ENCODE measurements at regions of chr5 and their contacts with region 1.

Region 1: DNA sequence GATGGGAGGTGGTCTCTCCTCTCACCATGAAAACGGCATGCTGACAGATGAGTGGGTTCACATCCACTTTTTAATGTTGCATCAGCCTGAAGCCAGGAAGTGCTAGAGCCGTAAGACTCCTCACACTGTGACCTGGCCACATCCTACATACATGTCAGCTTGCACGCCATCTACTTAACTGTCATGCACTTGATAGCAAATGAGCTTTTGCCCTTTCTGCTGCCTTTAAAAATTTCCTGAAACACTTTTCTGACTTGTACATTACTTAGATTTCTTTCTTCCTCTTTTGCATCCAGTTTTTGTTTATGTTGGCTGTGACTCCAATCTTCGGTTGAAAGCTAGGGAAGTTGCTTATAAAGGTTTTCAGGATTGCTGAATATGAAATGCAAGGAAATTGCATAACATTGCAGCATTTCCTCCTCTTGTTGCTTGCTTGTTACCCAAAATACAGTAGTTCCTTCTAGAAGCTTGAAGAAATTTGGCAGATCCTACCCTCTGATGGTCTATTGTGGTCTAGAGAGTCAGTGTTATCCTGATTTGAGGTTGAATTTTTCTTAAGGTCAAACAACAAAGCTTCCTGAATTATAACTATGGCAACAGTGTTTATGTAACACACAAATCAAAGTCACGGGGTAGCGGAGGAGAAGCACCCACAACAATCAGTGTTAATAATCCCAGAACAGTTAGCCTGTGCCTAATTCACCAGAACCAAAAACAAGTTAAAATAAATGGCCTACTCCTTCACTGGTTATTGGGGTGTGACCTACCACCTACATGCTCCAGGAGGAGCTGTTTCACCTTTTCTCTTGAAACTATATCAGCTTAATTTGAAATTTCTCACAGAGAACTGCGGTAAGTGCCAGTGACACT is 232.5 kb downstream of the ARHGAP26 start:
- DNase-seq: peak; percentile 89
- ATAC-seq: peak; percentile 88
- H3K4me3 Mint-ChIP-seq: peak overlapping the region; percentile 63
- H3K27ac Mint-ChIP-seq: peak overlapping the region; percentile 100
- H3K4me1 Mint-ChIP-seq: peaks cover 86% of the 10 kb centered on the region
- H3K27me3 Mint-ChIP-seq: no peaks in the 10 kb centered on the region
- CTCF ChIP-seq: peak; percentile 79

Region 2: DNA sequence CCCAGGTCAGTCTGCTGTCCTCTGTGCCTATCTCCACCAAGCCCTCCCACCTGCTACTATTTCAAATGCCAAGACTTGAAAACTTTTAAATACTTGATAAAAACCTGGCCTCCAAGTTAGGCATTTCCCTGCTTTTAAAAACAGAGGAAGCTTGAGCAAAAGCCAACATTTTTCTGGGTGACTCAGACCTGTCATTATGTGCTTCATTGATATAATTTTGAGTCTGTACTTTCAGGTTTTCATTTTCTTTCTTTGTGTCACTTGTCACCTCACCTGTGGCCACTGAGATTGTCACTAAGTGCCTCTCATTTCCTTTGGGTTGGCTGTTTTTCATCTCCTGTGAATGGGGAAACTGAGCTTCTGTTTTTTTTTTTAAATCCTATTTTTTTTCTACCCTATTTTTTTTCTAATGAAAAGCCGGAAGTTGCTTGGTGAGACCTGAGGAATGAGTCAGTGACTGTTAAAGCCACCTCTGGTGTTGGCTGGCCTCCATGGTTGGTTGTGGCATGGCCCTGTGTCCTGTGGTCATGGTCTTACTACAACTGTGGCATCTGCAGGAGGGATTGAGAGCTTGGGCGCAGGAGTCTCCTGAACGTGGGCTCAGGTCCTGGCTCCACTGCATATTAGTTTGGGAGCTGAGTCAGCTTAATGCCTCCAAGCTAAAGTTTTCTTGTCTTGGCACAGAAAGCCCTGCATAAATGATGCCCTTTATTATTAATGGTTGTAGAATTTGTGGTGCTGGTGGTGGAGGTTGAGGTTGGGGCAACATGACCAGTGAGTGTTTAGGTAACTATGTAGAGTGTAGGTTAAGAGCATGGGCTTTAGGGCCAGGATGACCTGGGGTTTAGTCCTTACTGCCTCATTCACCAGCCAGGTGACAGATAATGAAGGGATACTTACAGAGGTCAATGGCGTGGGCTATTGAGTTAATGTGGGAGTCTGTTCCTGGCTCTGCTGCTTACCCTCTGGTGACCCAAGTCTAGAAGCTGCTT is 175.7 kb before region 1 on chr5:
- CTCF ChIA-PET with region 1: no interaction called
- POLR2A ChIA-PET with region 1: no interaction called
- intact Hi-C with region 1: no loop called
- DNase-seq: peak; percentile 68
- ATAC-seq: peak; percentile 66
- H3K4me3 Mint-ChIP-seq: no peak overlapping the region
- H3K27ac Mint-ChIP-seq: peak overlapping the region; percentile 69
- H3K4me1 Mint-ChIP-seq: peaks cover 86% of the 10 kb centered on the region
- H3K27me3 Mint-ChIP-seq: no peaks in the 10 kb centered on the region
- CTCF ChIP-seq: no peak

Region 3: DNA sequence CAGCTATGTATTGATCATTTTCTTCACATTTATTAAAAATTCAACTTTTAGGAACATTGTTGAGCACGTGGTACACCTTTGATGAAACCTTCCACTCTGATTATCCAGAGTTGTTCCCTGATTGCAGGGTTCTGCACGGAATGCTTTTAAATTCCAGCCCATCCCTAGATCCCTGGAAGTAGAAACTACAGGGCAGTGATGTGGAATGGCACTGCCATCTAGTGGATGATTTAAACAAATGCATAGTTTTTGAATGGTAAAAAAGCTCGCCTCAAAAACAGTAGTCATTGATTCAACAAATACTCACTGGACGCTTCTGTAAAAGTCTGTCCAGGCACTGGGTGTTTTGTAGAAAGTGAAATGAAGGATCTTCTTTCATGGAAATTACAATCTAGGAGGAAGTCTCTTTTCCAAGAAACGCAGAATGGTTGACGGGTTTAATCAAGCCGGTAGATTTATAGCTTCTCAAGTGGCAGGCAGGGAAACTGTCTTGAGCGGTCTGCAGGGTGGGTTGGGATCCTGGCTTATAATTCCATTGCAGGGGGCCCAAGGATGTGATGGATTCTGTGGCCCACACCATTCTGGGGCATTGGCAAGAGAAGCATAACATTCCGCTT is 114.1 kb before region 1 on chr5:
- CTCF ChIA-PET with region 1: interaction called, 11 read pairs
- POLR2A ChIA-PET with region 1: no interaction called
- intact Hi-C with region 1: no loop called
- DNase-seq: no peak
- ATAC-seq: no peak
- H3K4me3 Mint-ChIP-seq: no peak overlapping the region
- H3K27ac Mint-ChIP-seq: no peak overlapping the region
- H3K4me1 Mint-ChIP-seq: peaks cover 8% of the 10 kb centered on the region
- H3K27me3 Mint-ChIP-seq: no peaks in the 10 kb centered on the region
- CTCF ChIP-seq: peak; percentile 93

Region 4: DNA sequence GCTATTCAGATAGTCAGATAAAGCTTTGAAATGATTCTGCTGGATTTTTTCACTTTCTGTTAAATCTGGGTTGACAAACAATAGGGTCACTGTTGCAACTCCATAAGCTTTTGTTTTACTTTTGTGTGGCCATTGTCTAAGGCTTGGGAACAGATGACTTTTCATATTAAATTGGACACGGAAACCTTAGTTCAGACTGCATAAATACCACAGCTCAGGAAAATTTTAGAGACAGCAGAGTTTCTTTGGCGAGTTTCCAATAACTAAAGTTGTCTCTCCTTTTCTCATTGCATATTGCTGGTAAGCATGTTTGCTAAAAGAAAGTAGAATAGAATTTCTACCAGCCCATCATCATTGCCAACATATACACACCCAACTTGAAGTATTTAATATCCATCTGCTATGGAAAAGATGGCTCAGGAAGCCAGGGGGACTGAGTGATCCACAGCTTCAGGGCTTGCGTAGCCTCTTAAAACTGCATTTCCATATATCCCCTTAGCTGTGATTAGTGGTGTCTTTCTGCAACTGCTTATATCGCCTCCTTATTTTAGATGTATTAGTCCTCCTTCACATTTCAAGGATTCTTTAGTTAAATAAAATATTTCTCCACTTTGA is 64.3 kb before region 1 on chr5:
- CTCF ChIA-PET with region 1: no interaction called
- POLR2A ChIA-PET with region 1: no interaction called
- intact Hi-C with region 1: no loop called
- DNase-seq: no peak
- ATAC-seq: no peak
- H3K4me3 Mint-ChIP-seq: no peak overlapping the region
- H3K27ac Mint-ChIP-seq: no peak overlapping the region
- H3K4me1 Mint-ChIP-seq: peaks cover 40% of the 10 kb centered on the region
- H3K27me3 Mint-ChIP-seq: no peaks in the 10 kb centered on the region
- CTCF ChIP-seq: no peak

Region 5: DNA sequence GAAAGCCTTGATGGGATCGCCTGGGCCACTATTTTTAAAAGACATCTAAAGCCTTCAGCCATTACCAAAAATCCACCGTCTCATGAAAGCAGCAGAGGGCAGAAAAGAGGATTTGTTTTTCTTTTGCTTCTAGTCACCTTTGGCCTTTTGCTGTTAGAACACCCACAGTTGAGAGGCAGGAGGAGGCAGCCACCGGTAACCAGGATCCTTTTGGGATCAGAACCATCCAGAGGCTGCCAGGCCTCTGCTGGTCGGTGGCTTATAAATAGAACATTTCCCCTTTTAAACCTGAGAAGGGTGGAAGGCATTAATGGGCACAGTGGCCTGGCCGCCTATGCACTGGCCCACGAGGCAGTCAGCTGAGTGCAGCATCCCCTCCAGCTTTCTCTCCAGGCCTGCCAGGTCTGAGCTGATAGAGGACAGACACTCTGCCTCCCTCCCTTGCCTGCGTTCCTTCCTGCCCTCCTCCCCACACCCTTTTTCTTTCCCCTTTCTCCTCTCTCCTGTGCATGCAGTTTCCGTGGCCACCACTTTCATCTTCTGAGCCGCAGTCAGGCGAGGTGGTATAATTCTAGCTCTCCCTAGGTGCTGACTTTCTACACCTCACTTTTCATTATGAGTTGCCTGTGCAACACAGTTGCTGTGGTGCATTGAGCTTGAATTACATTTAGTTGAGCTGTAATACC is 20.9 kb after region 1 on chr5:
- CTCF ChIA-PET with region 1: interaction called, 11 read pairs
- POLR2A ChIA-PET with region 1: interaction called, 3 read pairs
- intact Hi-C with region 1: no loop called
- DNase-seq: peak; percentile 81
- ATAC-seq: peak; percentile 81
- H3K4me3 Mint-ChIP-seq: peak overlapping the region; percentile 28
- H3K27ac Mint-ChIP-seq: peak overlapping the region; percentile 59
- H3K4me1 Mint-ChIP-seq: peaks cover 66% of the 10 kb centered on the region
- H3K27me3 Mint-ChIP-seq: no peaks in the 10 kb centered on the region
- CTCF ChIP-seq: no peak

Region 6: DNA sequence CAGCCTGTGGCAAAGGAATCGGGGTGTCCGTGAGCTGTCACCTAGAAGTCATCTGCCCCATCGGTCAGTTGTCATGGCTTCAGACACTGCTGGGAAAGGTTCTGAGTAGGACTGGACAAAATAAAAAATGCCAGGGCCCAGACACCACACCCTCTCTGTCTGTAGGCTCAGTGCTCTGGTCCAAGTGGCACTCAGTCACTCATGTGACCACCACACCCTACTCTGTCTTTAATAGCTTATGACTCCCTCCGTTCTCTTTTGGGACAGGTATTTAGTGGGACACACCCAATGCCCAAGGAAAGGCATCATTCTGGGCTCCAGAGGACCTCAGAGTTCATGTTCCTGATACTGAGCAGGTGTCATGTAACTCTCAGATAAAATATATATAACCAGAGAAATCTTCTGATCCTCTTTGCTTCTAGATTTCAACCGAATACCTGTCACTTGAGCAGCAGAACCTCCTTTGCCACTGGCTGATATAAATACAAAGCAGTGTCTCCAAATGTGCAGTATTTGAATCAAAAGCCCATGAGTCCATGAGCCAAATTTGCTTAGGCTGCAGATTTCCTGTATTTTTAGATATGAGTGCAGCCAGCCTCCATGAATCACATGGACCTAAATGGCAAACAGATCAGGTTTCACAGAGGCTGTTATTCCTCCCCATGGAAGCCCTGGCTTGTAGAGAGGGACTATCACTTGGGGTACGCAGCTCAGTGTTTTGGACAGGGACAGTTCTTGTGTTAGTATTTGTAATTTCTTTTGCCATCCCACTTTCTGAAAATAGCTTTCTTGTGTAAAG is 39.5 kb after region 1 on chr5:
- CTCF ChIA-PET with region 1: no interaction called
- POLR2A ChIA-PET with region 1: no interaction called
- intact Hi-C with region 1: no loop called
- DNase-seq: no peak
- ATAC-seq: no peak
- H3K4me3 Mint-ChIP-seq: no peak overlapping the region
- H3K27ac Mint-ChIP-seq: no peak overlapping the region
- H3K4me1 Mint-ChIP-seq: peaks cover 33% of the 10 kb centered on the region
- H3K27me3 Mint-ChIP-seq: no peaks in the 10 kb centered on the region
- CTCF ChIP-seq: no peak

Region 7: GRCh38 chr5:143101121-143101520 is 98.4 kb after region 1 on chr5:
- CTCF ChIA-PET with region 1: no interaction called
- POLR2A ChIA-PET with region 1: no interaction called
- intact Hi-C with region 1: loop called (anchors 5 kb)
- DNase-seq: peak; percentile 21
- ATAC-seq: peak; percentile 82
- H3K4me3 Mint-ChIP-seq: peak overlapping the region; percentile 34
- H3K27ac Mint-ChIP-seq: peak overlapping the region; percentile 94
- H3K4me1 Mint-ChIP-seq: peaks cover 40% of the 10 kb centered on the region
- H3K27me3 Mint-ChIP-seq: no peaks in the 10 kb centered on the region
- CTCF ChIP-seq: no peak

Region 8: DNA sequence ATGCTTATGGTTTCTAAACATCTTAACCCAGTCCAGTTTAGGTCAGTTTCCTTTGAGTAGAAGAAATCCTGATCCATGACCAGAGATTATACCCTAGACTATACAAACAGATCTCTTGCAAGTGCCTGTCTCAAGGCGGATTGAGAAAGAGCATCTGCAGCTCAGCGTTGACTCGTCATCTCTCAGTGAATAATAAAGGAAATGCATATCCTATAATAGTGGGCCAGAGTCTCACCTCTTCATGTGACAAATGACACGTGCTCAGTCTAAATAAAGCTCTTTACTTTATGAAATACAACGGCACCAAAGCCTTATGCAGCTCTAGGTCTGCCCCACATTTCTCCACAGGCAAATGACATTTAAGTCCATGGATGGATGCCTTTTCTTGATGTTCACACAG is 580.2 kb after region 1 on chr5:
- CTCF ChIA-PET with region 1: no interaction called
- POLR2A ChIA-PET with region 1: no interaction called
- intact Hi-C with region 1: loop called (anchors 10 kb)
- DNase-seq: no peak
- ATAC-seq: no peak
- H3K4me3 Mint-ChIP-seq: no peak overlapping the region
- H3K27ac Mint-ChIP-seq: no peak overlapping the region
- H3K4me1 Mint-ChIP-seq: peaks cover 32% of the 10 kb centered on the region
- H3K27me3 Mint-ChIP-seq: no peaks in the 10 kb centered on the region
- CTCF ChIP-seq: no peak

Region 9: DNA sequence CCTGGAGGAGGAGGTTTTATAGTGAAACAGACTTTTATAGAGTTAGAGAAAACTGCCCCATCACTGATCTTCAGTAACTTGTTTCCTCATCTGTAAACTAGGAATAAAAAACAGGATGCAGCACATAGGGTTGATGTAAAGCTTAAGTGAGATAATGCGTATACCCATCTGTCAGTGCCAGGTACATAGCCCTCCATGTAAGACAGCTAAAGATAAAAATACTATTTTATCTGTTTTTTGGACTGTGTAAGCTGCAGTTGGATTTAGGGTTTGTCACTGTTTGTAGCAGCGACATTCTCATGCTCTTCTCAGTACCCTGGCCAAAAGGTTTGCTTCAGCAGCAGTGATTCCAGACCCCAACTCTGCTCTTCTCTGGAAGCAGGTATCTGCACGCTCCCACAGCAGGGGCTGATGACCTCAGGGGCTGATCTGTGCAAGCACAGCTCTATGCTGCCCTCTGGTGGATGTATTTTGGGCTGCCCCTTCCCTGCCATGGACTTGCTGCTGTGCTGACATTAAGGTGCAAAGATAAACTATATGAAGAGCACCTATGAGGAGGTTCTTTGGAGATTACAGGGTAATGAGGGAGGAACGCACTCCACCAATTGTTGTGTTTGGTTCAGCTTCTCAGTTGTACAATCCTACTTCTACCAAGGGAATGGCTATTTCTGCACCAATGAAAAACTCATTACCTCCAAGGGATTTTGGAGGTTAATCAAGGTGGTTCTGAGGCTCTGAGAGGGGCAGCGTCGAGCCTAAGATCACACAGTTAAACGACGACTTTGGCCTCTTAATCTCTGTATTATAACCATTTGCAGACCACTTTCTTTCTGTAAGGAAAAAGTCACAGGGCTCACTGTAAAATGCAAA is 822.4 kb after region 1 on chr5:
- CTCF ChIA-PET with region 1: interaction called, 10 read pairs
- POLR2A ChIA-PET with region 1: interaction called, 3 read pairs
- intact Hi-C with region 1: loop called (anchors 5 kb)
- DNase-seq: peak; percentile 91
- ATAC-seq: peak; percentile 83
- H3K4me3 Mint-ChIP-seq: no peak overlapping the region
- H3K27ac Mint-ChIP-seq: no peak overlapping the region
- H3K4me1 Mint-ChIP-seq: peaks cover 17% of the 10 kb centered on the region
- H3K27me3 Mint-ChIP-seq: no peaks in the 10 kb centered on the region
- CTCF ChIP-seq: peak; percentile 81

Region 10: DNA sequence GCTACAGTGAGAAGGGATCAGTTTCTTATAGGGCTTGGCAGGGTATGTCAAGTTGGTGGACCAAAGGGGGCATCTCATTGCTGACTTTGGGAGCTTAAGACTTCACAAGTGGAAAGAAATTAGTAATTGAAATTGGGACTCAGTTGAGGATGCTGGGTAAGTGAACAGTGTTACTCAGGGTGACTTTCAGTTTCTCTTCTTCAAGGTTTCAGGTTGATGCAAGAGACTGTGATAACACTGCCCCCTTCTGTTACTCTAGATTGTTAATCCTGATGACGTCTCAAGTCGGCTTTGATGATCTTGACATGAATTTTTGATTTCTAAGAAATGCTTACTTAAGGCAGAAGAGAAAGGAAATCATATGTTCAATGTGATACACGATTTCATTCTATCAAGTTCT is 1189.3 kb after region 1 on chr5:
- CTCF ChIA-PET with region 1: interaction called, 6 read pairs
- POLR2A ChIA-PET with region 1: interaction called, 5 read pairs
- intact Hi-C with region 1: loop called (anchors 10 kb)
- DNase-seq: peak; percentile 47
- ATAC-seq: peak; percentile 81
- H3K4me3 Mint-ChIP-seq: no peak overlapping the region
- H3K27ac Mint-ChIP-seq: no peak overlapping the region
- H3K4me1 Mint-ChIP-seq: peaks cover 22% of the 10 kb centered on the region
- H3K27me3 Mint-ChIP-seq: no peaks in the 10 kb centered on the region
- CTCF ChIP-seq: peak; percentile 58